ENCODE measurements at regions of chr7 and their contacts with region 1.

Region 1: GRCh38 chr7:101815835-101816493 is 1.5 kb upstream of the CUX1 start:
- DNase-seq: peak; percentile 74
- ATAC-seq: peak; percentile 77
- H3K4me3 Mint-ChIP-seq: peak overlapping the region; percentile 83
- H3K27ac Mint-ChIP-seq: peak overlapping the region; percentile 65
- H3K4me1 Mint-ChIP-seq: peaks cover 28% of the 10 kb centered on the region
- H3K27me3 Mint-ChIP-seq: no peaks in the 10 kb centered on the region
- CTCF ChIP-seq: no peak

Region 2: DNA sequence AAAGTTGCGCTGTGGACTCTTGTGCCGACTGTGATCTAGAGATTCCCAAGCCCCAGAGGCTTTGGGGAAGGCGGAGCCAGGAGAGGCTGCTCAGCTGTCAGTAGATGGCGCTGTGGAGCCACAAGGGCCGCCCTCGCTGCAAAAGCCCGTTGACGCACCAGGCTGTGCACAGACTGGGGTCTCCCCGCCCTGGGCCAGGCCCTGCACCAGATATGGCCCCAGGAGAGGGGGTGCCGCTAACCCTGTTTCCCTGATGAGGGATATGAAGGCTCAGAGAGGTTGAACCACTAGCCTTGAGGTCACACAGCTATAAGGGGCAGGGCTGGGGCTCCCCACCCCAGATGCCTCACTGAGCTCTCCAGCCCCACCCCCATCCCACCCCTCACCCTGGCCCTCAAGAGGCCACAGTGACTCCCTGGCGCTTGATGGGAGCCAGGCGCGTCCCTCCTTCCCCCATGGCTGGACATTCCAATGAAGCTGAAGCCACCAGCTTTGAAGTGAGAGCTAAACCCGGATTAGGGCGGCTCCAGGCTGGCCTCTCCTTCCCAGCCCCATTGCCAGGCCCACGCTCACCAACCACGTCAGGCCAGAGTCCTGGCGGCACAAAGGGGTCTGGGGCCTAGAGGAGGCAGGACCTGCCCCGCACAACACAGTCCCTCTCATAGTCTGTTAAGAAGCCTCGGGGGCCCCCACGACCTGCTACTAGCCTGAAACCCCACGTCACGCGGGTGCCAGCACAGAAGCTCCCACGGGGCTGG is 213.3 kb before region 1 on chr7:
- CTCF ChIA-PET with region 1: interaction called, 3 read pairs
- POLR2A ChIA-PET with region 1: no interaction called
- intact Hi-C with region 1: loop called (anchors 1 kb)
- DNase-seq: peak; percentile 59
- ATAC-seq: peak; percentile 91
- H3K4me3 Mint-ChIP-seq: no peak overlapping the region
- H3K27ac Mint-ChIP-seq: no peak overlapping the region
- H3K4me1 Mint-ChIP-seq: no peaks in the 10 kb centered on the region
- H3K27me3 Mint-ChIP-seq: no peaks in the 10 kb centered on the region
- CTCF ChIP-seq: no peak

Region 3: DNA sequence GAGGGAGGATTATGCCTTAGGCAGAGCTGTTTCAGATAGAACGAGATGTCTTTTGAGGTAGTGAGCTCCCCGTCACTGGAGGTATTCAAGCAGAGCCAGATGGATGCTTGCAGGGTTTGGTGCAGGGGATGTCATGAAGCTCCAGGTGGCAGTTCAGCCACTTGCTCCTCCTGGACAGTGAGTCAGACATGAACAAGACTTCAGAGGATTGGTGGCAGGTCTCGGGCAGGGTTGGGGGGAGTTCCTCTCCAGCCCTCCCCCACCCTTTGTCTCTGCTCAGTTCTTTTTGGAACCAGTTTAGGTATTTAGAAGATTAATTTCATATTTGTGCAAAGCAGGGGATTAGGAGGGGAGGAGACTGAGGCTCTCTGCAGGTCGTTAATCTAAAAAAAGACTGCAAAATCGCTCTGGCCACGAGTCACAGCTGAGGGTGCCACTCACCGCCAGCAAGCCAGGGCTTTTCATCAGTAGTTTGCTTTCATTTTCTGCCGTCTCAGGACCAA is 165.3 kb before region 1 on chr7:
- CTCF ChIA-PET with region 1: no interaction called
- POLR2A ChIA-PET with region 1: no interaction called
- intact Hi-C with region 1: no loop called
- DNase-seq: no peak
- ATAC-seq: no peak
- H3K4me3 Mint-ChIP-seq: no peak overlapping the region
- H3K27ac Mint-ChIP-seq: no peak overlapping the region
- H3K4me1 Mint-ChIP-seq: no peaks in the 10 kb centered on the region
- H3K27me3 Mint-ChIP-seq: peaks cover 13% of the 10 kb centered on the region
- CTCF ChIP-seq: no peak

Region 4: DNA sequence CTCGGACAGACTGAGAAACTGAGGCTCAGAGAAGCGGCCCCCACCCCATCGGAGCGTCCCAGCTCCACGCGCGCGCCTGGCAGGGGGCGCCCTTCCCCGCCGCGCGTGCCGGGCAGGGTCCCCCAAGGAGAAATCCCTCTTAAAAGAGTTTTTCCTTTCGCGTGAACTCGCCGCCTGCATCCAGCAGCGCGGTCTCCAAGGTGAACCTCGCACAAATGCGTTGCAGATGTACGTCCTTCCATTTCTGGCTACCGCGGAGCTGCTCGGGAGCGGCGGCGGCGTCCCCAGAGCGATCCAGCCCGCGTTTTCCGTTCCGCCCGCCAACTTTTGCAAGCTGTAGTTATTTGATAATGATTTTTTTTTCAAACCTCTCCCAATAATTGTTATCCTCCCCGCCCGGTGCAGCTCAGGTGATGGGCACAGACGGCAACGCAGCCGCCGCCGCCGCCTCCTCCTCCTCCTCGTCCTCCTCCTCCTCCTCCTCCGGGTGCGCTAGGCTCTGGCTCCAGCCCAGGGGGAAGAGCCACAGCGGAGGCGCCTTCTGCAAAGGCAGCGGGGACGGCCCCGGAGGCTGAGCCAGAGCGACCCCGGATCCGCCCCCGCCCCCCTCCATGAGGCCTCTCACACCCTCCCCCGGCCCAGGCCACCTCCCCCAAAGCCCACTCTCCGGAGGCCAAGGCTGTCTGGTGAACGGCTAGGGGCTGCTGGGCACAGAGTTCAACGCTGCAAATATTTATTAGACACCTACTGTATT is 72.5 kb before region 1 on chr7:
- CTCF ChIA-PET with region 1: interaction called, 19 read pairs
- POLR2A ChIA-PET with region 1: interaction called, 12 read pairs
- intact Hi-C with region 1: loop called (anchors 1 kb)
- DNase-seq: peak; percentile 53
- ATAC-seq: peak; percentile 63
- H3K4me3 Mint-ChIP-seq: peak overlapping the region; percentile 82
- H3K27ac Mint-ChIP-seq: no peak overlapping the region
- H3K4me1 Mint-ChIP-seq: peaks cover 52% of the 10 kb centered on the region
- H3K27me3 Mint-ChIP-seq: no peaks in the 10 kb centered on the region
- CTCF ChIP-seq: no peak

Region 5: GRCh38 chr7:101990811-101991418 is 175.0 kb after region 1 on chr7:
- CTCF ChIA-PET with region 1: no interaction called
- POLR2A ChIA-PET with region 1: interaction called, 3 read pairs
- intact Hi-C with region 1: loop called (anchors 2 kb)
- DNase-seq: peak; percentile 57
- ATAC-seq: peak; percentile 86
- H3K4me3 Mint-ChIP-seq: peak overlapping the region; percentile 71
- H3K27ac Mint-ChIP-seq: peak overlapping the region; percentile 91
- H3K4me1 Mint-ChIP-seq: peaks cover 74% of the 10 kb centered on the region
- H3K27me3 Mint-ChIP-seq: no peaks in the 10 kb centered on the region
- CTCF ChIP-seq: no peak

Region 6: GRCh38 chr7:102147008-102147407 is 331.0 kb after region 1 on chr7:
- CTCF ChIA-PET with region 1: no interaction called
- POLR2A ChIA-PET with region 1: no interaction called
- intact Hi-C with region 1: loop called (anchors 5 kb)
- DNase-seq: no peak
- ATAC-seq: no peak
- H3K4me3 Mint-ChIP-seq: no peak overlapping the region
- H3K27ac Mint-ChIP-seq: no peak overlapping the region
- H3K4me1 Mint-ChIP-seq: peaks cover 8% of the 10 kb centered on the region
- H3K27me3 Mint-ChIP-seq: no peaks in the 10 kb centered on the region
- CTCF ChIP-seq: no peak

Measured in activated B cell treated with CpG ODN at 0.5 μM for 24 hours (primary cell).